Activated CD8-positive, alpha-beta T cell treated with anti-CD3 and anti-CD28 coated beads, Interleukin-2, amount 10 ng/mL, durations not matched to agents 7 days and 5 days (primary cell): ENCODE measurements at regions of chr16 and their contacts with region 1.

Region 1: GRCh38 chr16:30091474-30092372 is at the start of gene TBX6:
- DNase-seq: peak; percentile 96
- ATAC-seq: peak; percentile 84
- H3K4me3 Mint-ChIP-seq: peak within 1 kb of the TSS; percentile 89
- H3K27ac Mint-ChIP-seq: peak within 1 kb of the TSS; percentile 95
- H3K4me1 Mint-ChIP-seq: peaks cover 64% of the 10 kb centered on the region
- H3K27me3 Mint-ChIP-seq: no peaks in the 10 kb centered on the region
- total RNA-seq, gene TBX6: 1.3 TPM

Region 2: DNA sequence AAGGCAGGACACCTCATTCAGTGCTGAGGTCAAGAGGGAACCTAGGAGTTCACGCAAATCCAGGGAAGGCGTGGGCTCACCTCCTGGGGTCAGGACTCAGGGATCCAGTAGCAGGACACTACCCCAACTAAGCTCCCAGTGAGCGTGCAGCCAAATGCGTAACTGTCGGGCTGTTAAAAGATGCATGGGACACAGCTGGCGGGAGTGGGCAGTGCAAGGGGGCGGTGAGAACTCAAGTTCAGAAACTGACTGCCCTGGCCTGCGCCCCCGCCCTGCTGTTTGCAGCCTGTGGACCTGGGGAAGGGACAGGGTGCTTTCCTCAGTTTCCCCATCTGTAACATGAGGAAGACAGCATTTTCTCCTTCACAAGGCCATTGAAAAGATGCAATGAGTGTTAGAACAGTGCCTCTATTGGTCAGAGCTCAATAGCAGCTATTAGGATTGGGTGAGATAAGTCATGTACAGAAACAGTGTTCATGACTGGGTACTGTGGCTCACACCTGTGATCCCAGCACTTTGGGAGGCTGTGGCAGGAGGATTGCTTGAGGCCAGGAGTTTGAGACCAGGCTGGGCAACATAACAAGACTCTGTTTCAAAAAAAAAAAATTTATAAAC is 248.9 kb before region 1 on chr16:
- CTCF ChIA-PET with region 1: no interaction called
- POLR2A ChIA-PET with region 1: no interaction called
- DNase-seq: no peak
- ATAC-seq: no peak
- H3K4me3 Mint-ChIP-seq: no peak overlapping the region
- H3K27ac Mint-ChIP-seq: peak overlapping the region; percentile 25
- H3K4me1 Mint-ChIP-seq: no peaks in the 10 kb centered on the region
- H3K27me3 Mint-ChIP-seq: no peaks in the 10 kb centered on the region

Region 3: GRCh38 chr16:30025156-30025555 is 66.6 kb before region 1 on chr16:
- CTCF ChIA-PET with region 1: no interaction called
- POLR2A ChIA-PET with region 1: no interaction called
- DNase-seq: no peak
- ATAC-seq: no peak
- H3K4me3 Mint-ChIP-seq: no peak overlapping the region
- H3K27ac Mint-ChIP-seq: no peak overlapping the region
- H3K4me1 Mint-ChIP-seq: peaks cover 16% of the 10 kb centered on the region
- H3K27me3 Mint-ChIP-seq: peaks cover 25% of the 10 kb centered on the region

Region 4: DNA sequence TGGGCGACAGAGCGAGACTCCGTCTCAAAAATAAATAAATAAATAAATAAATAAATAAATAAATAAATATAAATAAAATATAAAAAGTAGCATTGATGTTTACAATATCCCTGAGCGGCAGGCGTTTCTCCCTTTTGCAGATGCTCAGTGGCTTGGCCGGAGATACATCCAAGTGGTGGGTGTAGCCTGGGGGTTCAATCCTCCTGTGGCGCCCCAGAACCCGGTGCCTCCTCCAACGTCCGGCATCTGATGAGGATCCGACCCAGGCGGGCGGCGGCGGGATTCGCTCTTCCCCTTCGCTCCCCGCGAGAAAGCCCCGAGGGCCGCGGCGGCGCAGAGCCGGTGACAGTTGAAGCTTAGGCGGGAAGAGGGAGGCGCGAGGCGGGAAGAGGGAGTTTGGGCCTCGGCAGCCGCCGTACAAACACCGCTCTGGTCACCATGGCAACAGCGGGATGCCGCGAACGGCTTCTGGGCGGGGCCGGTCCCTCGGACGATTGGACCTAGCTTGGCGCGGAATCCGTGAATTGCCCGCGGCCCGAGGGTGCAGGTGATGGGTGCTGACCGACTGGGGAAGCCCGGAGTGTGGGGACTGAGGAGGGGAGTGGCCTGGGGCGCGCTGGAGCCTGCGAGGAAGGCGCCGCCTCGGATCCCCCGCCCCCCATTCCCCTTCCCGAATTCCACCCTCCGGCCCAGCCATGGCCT is 38.9 kb before region 1 on chr16:
- CTCF ChIA-PET with region 1: interaction called, 23 read pairs
- POLR2A ChIA-PET with region 1: no interaction called
- DNase-seq: peak; percentile 96
- ATAC-seq: peak; percentile 75
- H3K4me3 Mint-ChIP-seq: peak overlapping the region; percentile 83
- H3K27ac Mint-ChIP-seq: peak overlapping the region; percentile 89
- H3K4me1 Mint-ChIP-seq: peaks cover 33% of the 10 kb centered on the region
- H3K27me3 Mint-ChIP-seq: peaks cover 3% of the 10 kb centered on the region

Region 5: DNA sequence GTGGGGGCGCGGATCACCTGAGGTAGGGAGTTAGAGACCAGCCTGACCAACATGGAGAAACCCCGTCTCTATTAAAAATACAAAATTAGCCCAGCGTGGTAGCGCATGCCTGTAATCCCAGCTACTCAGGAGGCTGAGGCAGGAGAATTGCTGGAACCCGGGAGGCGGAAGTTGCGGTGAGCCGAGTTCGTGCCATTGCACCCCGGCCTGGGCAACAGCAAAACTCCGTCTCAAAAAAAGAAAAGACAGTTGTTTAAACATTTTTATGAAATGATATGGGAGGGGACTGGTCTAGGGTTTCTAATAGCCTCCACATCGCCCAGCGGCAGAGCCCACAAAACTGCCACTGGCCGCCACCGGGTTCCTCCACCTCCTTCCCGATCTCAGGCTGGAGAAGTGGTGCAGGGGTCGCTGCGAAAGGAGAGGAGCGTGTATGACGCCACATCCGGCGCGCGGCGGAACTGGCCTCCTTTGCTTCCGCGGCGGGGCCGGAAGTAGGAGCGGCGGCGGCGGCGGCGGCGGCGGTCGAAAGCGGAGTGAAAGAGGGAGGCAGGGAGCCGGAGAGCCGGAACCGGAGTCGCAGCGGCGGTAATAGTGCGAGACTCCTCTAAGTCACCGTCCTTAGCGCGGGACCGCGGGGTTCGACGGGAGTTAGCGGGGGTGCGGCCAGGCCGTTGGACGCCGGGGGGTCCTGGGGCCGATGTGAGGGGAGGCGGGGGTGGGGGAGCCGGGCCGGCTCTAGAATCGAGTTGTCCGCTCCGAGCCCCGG is 16.0 kb before region 1 on chr16 and contains the start of gene PPP4C:
- CTCF ChIA-PET with region 1: interaction called, 62 read pairs
- POLR2A ChIA-PET with region 1: interaction called, 34 read pairs
- DNase-seq: peak; percentile 95
- ATAC-seq: peak; percentile 85
- H3K4me3 Mint-ChIP-seq: peak within 1 kb of the TSS; percentile 93
- H3K27ac Mint-ChIP-seq: peak within 1 kb of the TSS; percentile 98
- H3K4me1 Mint-ChIP-seq: peaks cover 42% of the 10 kb centered on the region
- H3K27me3 Mint-ChIP-seq: no peaks in the 10 kb centered on the region
- total RNA-seq, gene PPP4C: 157 TPM

Region 6: DNA sequence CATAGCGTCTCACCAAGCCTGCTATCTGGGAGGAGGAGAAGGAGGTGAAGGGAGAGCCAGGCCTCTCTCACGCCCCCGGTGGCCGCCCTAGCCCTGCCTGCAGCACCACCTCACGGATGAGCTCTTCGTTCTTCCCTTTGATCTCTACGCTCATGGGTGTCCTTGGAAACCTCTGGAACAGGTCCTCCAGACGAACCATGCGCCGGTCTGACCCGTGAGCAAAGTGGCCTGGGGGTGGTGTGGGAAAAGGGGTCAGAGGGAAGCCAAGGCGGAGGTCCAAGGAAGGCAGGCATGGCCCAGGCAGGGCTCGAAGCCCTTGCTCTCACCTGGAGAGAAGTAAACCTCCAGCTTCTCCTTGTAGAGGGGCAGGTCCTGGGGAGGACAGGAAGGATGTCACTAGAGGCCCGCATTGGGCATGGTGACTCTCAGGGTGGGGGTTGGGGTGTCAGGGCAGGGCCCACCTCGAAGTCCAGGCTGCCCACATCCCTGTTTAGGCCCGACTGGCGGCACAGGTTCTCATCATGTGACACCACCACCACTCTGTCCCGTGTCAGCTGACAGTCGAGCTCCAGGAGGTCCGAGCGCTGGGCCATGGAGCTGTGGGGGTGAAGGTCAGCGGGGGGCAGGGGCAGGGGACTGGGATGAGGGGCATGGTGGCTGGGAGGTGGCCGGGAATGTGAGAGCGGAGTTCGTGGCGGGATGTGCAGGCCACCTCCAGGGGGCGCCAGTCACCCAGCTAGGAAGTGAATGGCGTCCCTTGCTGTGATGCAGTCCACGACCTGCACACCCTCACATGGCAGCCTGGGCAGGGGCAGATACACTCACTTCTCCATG is 20.7 kb after region 1 on chr16:
- CTCF ChIA-PET with region 1: interaction called, 27 read pairs
- POLR2A ChIA-PET with region 1: interaction called, 3 read pairs
- DNase-seq: peak; percentile 67
- ATAC-seq: peak; percentile 78
- H3K4me3 Mint-ChIP-seq: no peak overlapping the region
- H3K27ac Mint-ChIP-seq: peak overlapping the region; percentile 60
- H3K4me1 Mint-ChIP-seq: peaks cover 21% of the 10 kb centered on the region
- H3K27me3 Mint-ChIP-seq: no peaks in the 10 kb centered on the region

Region 7: DNA sequence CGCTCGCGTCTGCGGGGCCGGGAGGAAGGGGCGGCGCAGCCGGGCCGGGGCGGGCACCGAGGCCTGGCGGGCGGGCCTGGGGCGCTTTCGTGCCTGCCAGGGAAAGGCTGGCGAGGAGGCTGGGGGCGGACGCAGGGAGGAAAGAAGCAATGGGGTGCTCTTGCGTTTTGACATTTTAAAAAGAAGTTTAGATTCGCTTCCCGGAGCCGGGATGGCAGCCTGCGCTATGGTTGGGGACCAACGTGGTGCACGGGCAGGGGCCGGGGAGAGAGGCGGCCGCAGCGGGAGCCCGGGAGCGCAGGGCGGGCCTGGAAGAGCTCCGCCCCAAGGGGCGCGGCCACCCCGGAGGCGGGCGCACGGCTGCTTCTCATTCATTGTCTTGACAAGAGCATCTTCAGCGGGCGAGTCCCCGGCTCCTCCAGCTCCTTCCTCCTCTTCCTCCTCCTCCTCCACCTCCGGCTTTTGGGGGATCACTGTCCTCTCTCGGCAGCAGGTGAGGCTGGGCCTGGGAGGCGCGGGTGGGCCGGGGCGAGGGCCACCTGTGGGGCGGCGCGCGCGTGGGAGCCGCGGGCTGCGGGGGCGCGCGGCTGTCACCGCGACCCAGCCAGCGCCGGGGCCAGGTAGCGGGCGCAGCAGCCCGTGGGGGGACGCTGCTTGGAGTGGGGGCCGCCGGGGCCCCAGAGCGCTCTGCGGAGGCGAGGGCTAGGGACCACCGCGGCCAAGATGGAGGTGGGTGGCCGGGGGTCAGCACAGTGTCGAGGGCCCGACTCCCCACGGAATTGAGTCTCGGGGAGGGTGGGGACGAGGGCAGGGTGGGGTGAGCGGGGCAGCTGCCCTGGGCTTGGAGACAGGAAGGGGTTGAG is 91.7 kb after region 1 on chr16 and contains the start of gene CORO1A:
- CTCF ChIA-PET with region 1: interaction called, 54 read pairs
- POLR2A ChIA-PET with region 1: interaction called, 102 read pairs
- DNase-seq: peak; percentile 92
- ATAC-seq: peak; percentile 51
- H3K4me3 Mint-ChIP-seq: peak within 1 kb of the TSS; percentile 98
- H3K27ac Mint-ChIP-seq: peak within 1 kb of the TSS; percentile 99
- H3K4me1 Mint-ChIP-seq: peaks cover 30% of the 10 kb centered on the region
- H3K27me3 Mint-ChIP-seq: no peaks in the 10 kb centered on the region
- total RNA-seq, gene CORO1A: 1,875 to 1,983 TPM